CD4-positive, alpha-beta T cell (primary cell): ENCODE measurements at regions of chr14 and their contacts with region 1.

Region 1: DNA sequence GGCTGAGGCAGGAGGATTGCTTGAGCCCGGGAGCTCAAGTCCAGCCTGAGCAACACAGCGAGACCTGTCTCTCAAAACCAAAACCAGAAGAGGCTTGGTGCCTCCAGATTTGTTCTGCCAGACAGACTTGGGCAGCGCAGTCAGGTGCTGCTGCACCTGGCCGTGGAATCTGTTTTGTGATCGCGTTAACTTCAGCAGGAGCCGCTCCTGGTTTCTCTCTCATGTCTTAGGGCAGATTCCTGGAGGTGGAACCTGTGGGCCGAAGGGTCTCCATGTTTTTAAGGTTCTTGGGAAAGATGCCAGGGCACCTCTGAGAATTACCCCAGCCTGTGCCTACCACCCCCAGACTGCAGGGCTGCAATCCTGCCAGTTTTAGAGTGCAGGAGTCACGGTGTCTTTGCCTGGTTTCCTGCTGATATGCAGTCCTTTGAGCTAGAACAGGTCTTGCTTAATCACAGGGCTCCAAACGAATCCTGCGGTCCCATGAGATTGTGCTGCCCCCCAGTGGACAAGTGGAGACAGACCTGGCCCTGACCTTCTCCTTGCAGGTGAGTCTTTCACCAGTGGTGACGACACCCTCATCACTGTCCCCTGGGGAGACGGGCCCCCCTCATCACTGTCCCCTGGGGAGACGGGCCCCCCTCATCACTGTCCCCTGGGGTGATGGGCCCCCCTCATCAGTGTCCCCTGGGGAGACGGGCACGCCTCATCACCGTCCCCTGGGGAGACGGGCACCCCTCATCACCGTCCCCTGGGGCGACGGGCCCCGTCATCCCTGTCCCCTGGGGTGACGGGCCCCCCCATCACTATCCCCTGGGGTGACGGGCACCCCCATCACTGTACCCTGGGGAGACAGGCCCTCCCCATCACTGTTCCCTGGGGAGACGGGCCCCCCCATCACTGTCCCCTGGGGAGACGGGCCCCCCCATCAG is 37.6 kb downstream of the PACS2 start:
- DNase-seq: peak; percentile 80 to 93 (median 87)
- ATAC-seq: peak; percentile 100
- H3K4me3 ChIP-seq: no peak overlapping the region
- H3K4me3 Mint-ChIP-seq: no peak overlapping the region
- H3K27ac ChIP-seq: no peak overlapping the region
- H3K27ac Mint-ChIP-seq: no peak overlapping the region
- H3K4me1 ChIP-seq: peaks cover 5% of the 10 kb centered on the region
- H3K4me1 Mint-ChIP-seq: peaks cover 4% of the 10 kb centered on the region
- H3K27me3 ChIP-seq: no peaks in the 10 kb centered on the region
- H3K27me3 Mint-ChIP-seq: no peaks in the 10 kb centered on the region
- CTCF ChIP-seq: peak; percentile 74

Region 2: DNA sequence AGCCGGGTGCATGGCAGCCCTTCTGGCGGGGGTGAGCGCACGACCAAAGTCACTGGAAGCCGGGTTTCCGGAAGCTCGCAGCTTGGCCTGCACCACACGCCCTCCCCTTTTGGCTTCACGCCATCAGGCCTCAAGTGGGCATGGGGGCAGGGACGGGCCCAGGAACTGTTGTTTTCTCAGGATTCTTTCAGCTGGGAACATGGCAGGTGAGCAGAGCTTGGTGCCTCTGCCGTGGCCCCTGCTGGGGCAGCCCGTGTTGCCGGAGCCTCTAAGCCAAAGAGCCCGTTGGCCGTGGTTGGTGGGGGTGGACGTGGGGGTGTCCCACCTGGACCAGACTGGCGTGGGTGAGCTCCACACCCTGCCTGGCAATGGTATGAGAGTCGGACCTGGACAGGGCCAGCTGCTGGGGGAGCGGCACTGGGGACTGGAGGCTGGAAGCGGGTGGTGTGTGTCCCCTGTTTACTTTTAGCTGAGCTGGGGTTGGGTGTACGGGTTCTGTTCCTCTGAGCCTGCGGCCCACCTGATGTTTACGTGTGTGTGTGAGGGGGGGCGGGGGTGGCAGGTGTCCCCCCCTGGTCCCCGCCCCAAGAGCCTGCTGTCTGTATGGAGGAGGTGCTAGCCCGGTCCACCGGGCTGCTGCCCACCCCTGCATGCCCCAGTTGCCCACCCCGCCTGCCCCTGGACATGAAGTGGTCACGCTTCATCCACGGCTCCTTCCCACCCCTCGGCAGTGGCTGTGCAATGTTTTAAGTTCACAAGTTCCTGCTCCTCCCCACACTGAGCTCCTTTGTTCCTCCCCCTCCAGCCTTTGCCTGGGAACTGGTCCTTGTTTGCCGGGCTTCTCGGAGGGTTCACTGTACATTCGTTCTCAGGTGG is 456.2 kb before region 1 on chr14:
- CTCF ChIA-PET with region 1: no interaction called
- POLR2A ChIA-PET with region 1: no interaction called
- intact Hi-C with region 1: loop called in 1 of 2 experiments (anchors 2 kb)
- DNase-seq: peak in 1 of 14 experiments; percentile 26
- ATAC-seq: no peak
- H3K4me3 ChIP-seq: no peak overlapping the region
- H3K4me3 Mint-ChIP-seq: no peak overlapping the region
- H3K27ac ChIP-seq: no peak overlapping the region
- H3K27ac Mint-ChIP-seq: no peak overlapping the region
- H3K4me1 ChIP-seq: no peaks in the 10 kb centered on the region
- H3K4me1 Mint-ChIP-seq: peaks cover 4% of the 10 kb centered on the region
- H3K27me3 ChIP-seq: no peaks in the 10 kb centered on the region
- H3K27me3 Mint-ChIP-seq: no peaks in the 10 kb centered on the region
- CTCF ChIP-seq: no peak

Region 3: GRCh38 chr14:104976198-104977007 is 375.8 kb before region 1 on chr14:
- CTCF ChIA-PET with region 1: no interaction called
- POLR2A ChIA-PET with region 1: no interaction called
- intact Hi-C with region 1: loop called (anchors 1 to 2 kb)
- DNase-seq: peak; percentile 76 to 92 (median 85)
- ATAC-seq: peak; percentile 79
- H3K4me3 ChIP-seq: no peak overlapping the region
- H3K4me3 Mint-ChIP-seq: peak overlapping the region; percentile 90
- H3K27ac ChIP-seq: no peak overlapping the region
- H3K27ac Mint-ChIP-seq: no peak overlapping the region
- H3K4me1 ChIP-seq: peaks cover 23% of the 10 kb centered on the region
- H3K4me1 Mint-ChIP-seq: peaks cover 5% of the 10 kb centered on the region
- H3K27me3 ChIP-seq: peaks cover 25 to 29% of the 10 kb centered on the region in 2 experiments
- H3K27me3 Mint-ChIP-seq: peaks cover 36% of the 10 kb centered on the region
- CTCF ChIP-seq: peak; percentile 89

Region 4: GRCh38 chr14:105203057-105203531 is 149.1 kb before region 1 on chr14:
- CTCF ChIA-PET with region 1: interaction called, 6 read pairs
- POLR2A ChIA-PET with region 1: no interaction called
- intact Hi-C with region 1: loop called (anchors 1 kb)
- DNase-seq: peak; percentile 40 to 76 (median 52)
- ATAC-seq: peak; percentile 48
- H3K4me3 ChIP-seq: no peak overlapping the region
- H3K4me3 Mint-ChIP-seq: no peak overlapping the region
- H3K27ac ChIP-seq: no peak overlapping the region
- H3K27ac Mint-ChIP-seq: no peak overlapping the region
- H3K4me1 ChIP-seq: peaks cover 26% of the 10 kb centered on the region
- H3K4me1 Mint-ChIP-seq: peaks cover 9% of the 10 kb centered on the region
- H3K27me3 ChIP-seq: peaks cover 22 to 27% of the 10 kb centered on the region in 2 experiments
- H3K27me3 Mint-ChIP-seq: peaks cover 31% of the 10 kb centered on the region
- CTCF ChIP-seq: peak; percentile 97

Region 5: GRCh38 chr14:105281371-105282097 is 70.7 kb before region 1 on chr14:
- CTCF ChIA-PET with region 1: no interaction called
- POLR2A ChIA-PET with region 1: no interaction called
- intact Hi-C with region 1: loop called in 1 of 2 experiments (anchors 2 kb)
- DNase-seq: peak in 4 of 14 experiments; percentile 43 to 67 (median 57)
- ATAC-seq: no peak
- H3K4me3 ChIP-seq: no peak overlapping the region
- H3K4me3 Mint-ChIP-seq: no peak overlapping the region
- H3K27ac ChIP-seq: no peak overlapping the region
- H3K27ac Mint-ChIP-seq: no peak overlapping the region
- H3K4me1 ChIP-seq: peaks cover 23% of the 10 kb centered on the region
- H3K4me1 Mint-ChIP-seq: peaks cover 36% of the 10 kb centered on the region
- H3K27me3 ChIP-seq: no peaks in the 10 kb centered on the region
- H3K27me3 Mint-ChIP-seq: no peaks in the 10 kb centered on the region
- CTCF ChIP-seq: peak; percentile 59

Region 6: GRCh38 chr14:105300792-105301533 is 51.2 kb before region 1 on chr14 and contains the start of gene BRF1:
- CTCF ChIA-PET with region 1: interaction called, 3 read pairs
- POLR2A ChIA-PET with region 1: interaction called, 5 read pairs
- intact Hi-C with region 1: loop called in 1 of 2 experiments (anchors 5 kb)
- DNase-seq: peak; percentile 95 to 100 (median 98)
- ATAC-seq: peak; percentile 88
- H3K4me3 ChIP-seq: peak within 1 kb of the TSS; percentile 71
- H3K4me3 Mint-ChIP-seq: peak within 1 kb of the TSS; percentile 98
- H3K27ac ChIP-seq: peak within 1 kb of the TSS; percentile 79 to 88
- H3K27ac Mint-ChIP-seq: peak within 1 kb of the TSS; percentile 85
- H3K4me1 ChIP-seq: peaks cover 37% of the 10 kb centered on the region
- H3K4me1 Mint-ChIP-seq: peaks cover 46% of the 10 kb centered on the region
- H3K27me3 ChIP-seq: no peaks in the 10 kb centered on the region
- H3K27me3 Mint-ChIP-seq: no peaks in the 10 kb centered on the region
- CTCF ChIP-seq: no peak
- total RNA-seq, gene BRF1: 77.4 to 77.7 TPM

Region 7: GRCh38 chr14:106395456-106396050 is 1043.4 kb after region 1 on chr14:
- CTCF ChIA-PET with region 1: no interaction called
- POLR2A ChIA-PET with region 1: no interaction called
- intact Hi-C with region 1: no loop called
- DNase-seq: peak in 4 of 14 experiments; percentile 42 to 66 (median 60)
- ATAC-seq: peak; percentile 77
- H3K4me3 ChIP-seq: no peak overlapping the region
- H3K4me3 Mint-ChIP-seq: peak overlapping the region; percentile 80
- H3K27ac ChIP-seq: peak overlapping the region in 1 of 2 donors; percentile 2
- H3K27ac Mint-ChIP-seq: peak overlapping the region; percentile 90
- H3K4me1 ChIP-seq: peaks cover 25% of the 10 kb centered on the region
- H3K4me1 Mint-ChIP-seq: peaks cover 52% of the 10 kb centered on the region
- H3K27me3 ChIP-seq: no peaks in the 10 kb centered on the region
- H3K27me3 Mint-ChIP-seq: peaks cover 7% of the 10 kb centered on the region
- CTCF ChIP-seq: no peak